ENCODE measurements at regions of chr4 and their contacts with region 1.

Region 1: GRCh38 chr4:169010125-169011023 is at the start of gene CBR4:
- DNase-seq: peak; percentile 99
- ATAC-seq: peak; percentile 96
- H3K4me3 ChIP-seq: peak within 1 kb of the TSS; percentile 94 to 100 (median 99)
- H3K4me3 Mint-ChIP-seq: peak within 1 kb of the TSS; percentile 91
- H3K27ac ChIP-seq: peak within 1 kb of the TSS; percentile 89 to 92
- H3K27ac Mint-ChIP-seq: peak within 1 kb of the TSS; percentile 99
- H3K4me1 ChIP-seq: peaks cover 16 to 18% of the 10 kb centered on the region in 2 donors
- H3K4me1 Mint-ChIP-seq: peaks cover 26% of the 10 kb centered on the region
- H3K27me3 ChIP-seq: no peaks in the 10 kb centered on the region
- H3K27me3 Mint-ChIP-seq: peaks cover 4% of the 10 kb centered on the region
- CTCF ChIP-seq: peak; percentile 41
- total RNA-seq, gene CBR4: 32.1 and 39.0 TPM in 2 replicates

Region 2: GRCh38 chr4:168480931-168481611 is 529.3 kb before region 1 on chr4:
- CTCF ChIA-PET with region 1: no interaction called
- POLR2A ChIA-PET with region 1: no interaction called
- intact Hi-C with region 1: loop called (anchors 2 kb)
- DNase-seq: peak; percentile 78
- ATAC-seq: peak; percentile 43
- H3K4me3 ChIP-seq: peak overlapping the region; percentile 86 to 97 (median 91)
- H3K4me3 Mint-ChIP-seq: peak overlapping the region; percentile 98
- H3K27ac ChIP-seq: peak overlapping the region; percentile 88 to 92
- H3K27ac Mint-ChIP-seq: peak overlapping the region; percentile 98
- H3K4me1 ChIP-seq: peaks cover 12% of the 10 kb centered on the region in 2 donors
- H3K4me1 Mint-ChIP-seq: peaks cover 44% of the 10 kb centered on the region
- H3K27me3 ChIP-seq: no peaks in the 10 kb centered on the region
- H3K27me3 Mint-ChIP-seq: peaks cover 5% of the 10 kb centered on the region
- CTCF ChIP-seq: no peak

Region 3: DNA sequence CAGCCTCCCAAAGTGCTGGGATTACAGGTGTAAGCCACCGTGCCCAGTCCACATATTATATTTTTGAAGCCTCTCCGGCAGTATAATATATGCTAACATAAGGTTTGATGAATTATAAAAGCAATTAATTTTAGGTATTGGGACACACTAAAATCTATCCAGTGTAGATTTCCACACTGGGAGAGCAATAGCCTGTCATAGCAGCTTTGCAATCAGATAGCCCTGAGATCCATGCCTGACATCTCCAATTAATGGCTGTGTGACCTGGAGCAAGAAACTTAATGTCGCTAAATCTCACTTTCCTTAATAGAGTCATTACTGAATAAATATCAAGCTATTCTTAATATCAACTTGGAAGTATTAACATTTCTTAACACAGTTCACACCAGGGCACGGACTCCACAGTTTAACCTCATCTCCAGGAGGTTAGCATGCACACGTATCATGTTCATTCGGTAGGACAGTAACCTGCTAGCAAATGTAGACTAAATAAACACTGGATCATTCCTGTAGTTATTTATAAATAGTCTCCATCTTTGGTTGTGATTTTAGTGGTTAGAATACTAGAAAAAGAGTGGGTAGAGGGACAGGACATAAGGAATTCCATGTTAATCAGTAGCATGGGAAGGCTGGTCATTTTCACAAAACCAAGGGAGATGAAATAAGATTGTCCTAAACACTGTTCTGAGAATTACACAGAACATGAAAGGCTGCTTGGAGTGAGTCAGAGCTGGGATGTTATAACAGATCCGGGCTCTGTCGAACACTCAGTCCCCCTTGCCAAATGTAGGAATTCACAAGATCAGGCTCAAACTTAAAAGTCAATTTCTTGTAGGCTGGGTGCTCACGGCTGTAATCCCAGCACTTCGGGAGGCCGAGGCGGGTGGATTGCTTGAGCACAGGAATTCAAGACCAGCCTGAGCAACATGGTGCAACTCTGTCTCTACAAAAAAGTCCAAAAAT is 258.8 kb before region 1 on chr4:
- CTCF ChIA-PET with region 1: no interaction called
- POLR2A ChIA-PET with region 1: no interaction called
- intact Hi-C with region 1: no loop called
- DNase-seq: no peak
- ATAC-seq: no peak
- H3K4me3 ChIP-seq: no peak overlapping the region
- H3K4me3 Mint-ChIP-seq: no peak overlapping the region
- H3K27ac ChIP-seq: no peak overlapping the region
- H3K27ac Mint-ChIP-seq: no peak overlapping the region
- H3K4me1 ChIP-seq: no peaks in the 10 kb centered on the region
- H3K4me1 Mint-ChIP-seq: no peaks in the 10 kb centered on the region
- H3K27me3 ChIP-seq: no peaks in the 10 kb centered on the region
- H3K27me3 Mint-ChIP-seq: peaks cover 2% of the 10 kb centered on the region
- CTCF ChIP-seq: no peak

Region 4: DNA sequence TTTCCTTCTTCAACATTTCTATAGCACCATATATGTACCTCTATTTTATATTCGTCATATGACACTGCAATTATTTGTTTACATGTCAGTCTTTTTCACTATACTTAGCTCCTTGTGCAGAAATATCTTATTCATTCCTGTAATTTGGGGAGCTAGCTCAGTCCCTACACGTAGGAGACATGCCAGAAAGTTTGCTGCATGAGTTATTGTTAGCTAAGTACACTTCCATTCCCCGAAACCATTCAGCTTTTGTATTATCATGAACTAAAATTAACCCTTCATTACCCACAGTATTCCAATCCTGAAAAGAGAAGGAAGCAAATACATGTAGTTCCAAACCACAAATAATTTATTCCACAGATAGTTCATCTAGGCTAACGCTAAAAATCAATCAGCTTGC is 10.6 kb before region 1 on chr4:
- CTCF ChIA-PET with region 1: interaction called, 15 read pairs
- POLR2A ChIA-PET with region 1: interaction called, 3 read pairs
- intact Hi-C with region 1: no loop called
- DNase-seq: no peak
- ATAC-seq: no peak
- H3K4me3 ChIP-seq: no peak overlapping the region
- H3K4me3 Mint-ChIP-seq: no peak overlapping the region
- H3K27ac ChIP-seq: no peak overlapping the region
- H3K27ac Mint-ChIP-seq: no peak overlapping the region
- H3K4me1 ChIP-seq: no peaks in the 10 kb centered on the region
- H3K4me1 Mint-ChIP-seq: peaks cover 4% of the 10 kb centered on the region
- H3K27me3 ChIP-seq: no peaks in the 10 kb centered on the region
- H3K27me3 Mint-ChIP-seq: no peaks in the 10 kb centered on the region
- CTCF ChIP-seq: no peak

Region 5: DNA sequence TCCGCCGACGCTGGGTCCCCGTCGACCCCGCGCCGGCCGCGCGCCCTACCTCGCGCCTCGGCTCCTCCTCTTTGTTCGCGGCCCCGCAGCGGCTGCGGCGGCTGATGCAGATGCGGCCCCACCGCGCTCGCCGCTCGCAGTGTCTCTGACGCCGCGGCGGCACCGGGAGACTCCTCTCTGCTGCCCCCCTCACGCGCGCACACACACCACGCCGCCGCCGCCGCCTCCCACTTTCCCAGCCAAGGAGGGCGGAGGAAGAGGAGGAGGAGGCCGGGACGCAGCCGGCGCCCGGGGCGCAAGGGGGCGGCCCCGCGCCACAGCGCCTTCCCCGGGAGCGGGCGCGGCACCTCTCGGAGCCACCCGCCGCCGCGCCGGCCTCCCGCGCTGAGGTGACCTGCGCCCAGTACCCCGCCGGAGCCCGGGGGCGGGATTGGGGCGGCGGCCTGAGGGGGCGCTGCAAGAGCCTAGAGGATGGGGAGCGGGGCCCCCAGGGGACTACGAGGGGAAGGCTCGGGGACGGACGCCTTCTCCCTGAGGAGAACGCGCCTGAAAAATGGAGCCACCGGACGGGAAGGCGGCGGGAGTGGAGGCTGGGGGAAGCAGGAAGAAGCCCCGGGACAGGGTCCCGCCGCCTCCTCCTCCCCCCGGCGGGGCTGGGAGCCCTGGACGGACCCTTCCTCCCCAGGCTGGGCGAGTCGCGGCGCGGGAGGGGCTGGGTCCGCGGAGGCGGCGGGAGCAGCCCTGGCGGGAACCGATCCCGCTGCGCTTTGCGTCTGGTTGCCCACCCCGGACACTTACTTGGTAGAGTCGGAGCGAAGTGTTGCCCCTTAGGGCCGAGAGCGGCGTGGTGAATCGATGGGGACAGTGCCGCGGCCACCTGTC is 260.7 kb after region 1 on chr4 and contains the start of gene SH3RF1:
- CTCF ChIA-PET with region 1: no interaction called
- POLR2A ChIA-PET with region 1: interaction called, 5 read pairs
- intact Hi-C with region 1: loop called (anchors 2 kb)
- DNase-seq: peak; percentile 74
- ATAC-seq: peak; percentile 61
- H3K4me3 ChIP-seq: peak within 1 kb of the TSS; percentile 65 to 90 (median 77)
- H3K4me3 Mint-ChIP-seq: peak within 1 kb of the TSS; percentile 94
- H3K27ac ChIP-seq: peak within 1 kb of the TSS in 1 of 2 donors; percentile 16
- H3K27ac Mint-ChIP-seq: peak within 1 kb of the TSS; percentile 81
- H3K4me1 ChIP-seq: peaks cover 23 to 27% of the 10 kb centered on the region in 2 donors
- H3K4me1 Mint-ChIP-seq: peaks cover 28% of the 10 kb centered on the region
- H3K27me3 ChIP-seq: peaks cover 0 to 7% (median 0%) of the 10 kb centered on the region in 4 experiments
- H3K27me3 Mint-ChIP-seq: no peaks in the 10 kb centered on the region
- CTCF ChIP-seq: peak; percentile 37
- total RNA-seq, gene SH3RF1: 5.4 and 6.5 TPM in 2 replicates

Region 6: GRCh38 chr4:169566021-169566818 is 555.8 kb after region 1 on chr4:
- CTCF ChIA-PET with region 1: interaction called, 3 read pairs
- POLR2A ChIA-PET with region 1: no interaction called
- intact Hi-C with region 1: loop called (anchors 5 kb)
- DNase-seq: peak; percentile 64
- ATAC-seq: peak; percentile 41
- H3K4me3 ChIP-seq: no peak overlapping the region
- H3K4me3 Mint-ChIP-seq: no peak overlapping the region
- H3K27ac ChIP-seq: no peak overlapping the region
- H3K27ac Mint-ChIP-seq: no peak overlapping the region
- H3K4me1 ChIP-seq: no peaks in the 10 kb centered on the region
- H3K4me1 Mint-ChIP-seq: peaks cover 4% of the 10 kb centered on the region
- H3K27me3 ChIP-seq: no peaks in the 10 kb centered on the region
- H3K27me3 Mint-ChIP-seq: no peaks in the 10 kb centered on the region
- CTCF ChIP-seq: peak; percentile 84

Region 7: GRCh38 chr4:169619959-169620879 is 609.8 kb after region 1 on chr4 and contains the start of gene CLCN3:
- CTCF ChIA-PET with region 1: interaction called, 3 read pairs
- POLR2A ChIA-PET with region 1: no interaction called
- intact Hi-C with region 1: loop called (anchors 1 kb)
- DNase-seq: peak; percentile 99
- ATAC-seq: peak; percentile 93
- H3K4me3 ChIP-seq: peak within 1 kb of the TSS; percentile 61 to 100 (median 95)
- H3K4me3 Mint-ChIP-seq: peak within 1 kb of the TSS; percentile 96
- H3K27ac ChIP-seq: peak within 1 kb of the TSS; percentile 98
- H3K27ac Mint-ChIP-seq: peak within 1 kb of the TSS; percentile 100
- H3K4me1 ChIP-seq: peaks cover 18 to 23% of the 10 kb centered on the region in 2 donors
- H3K4me1 Mint-ChIP-seq: peaks cover 39% of the 10 kb centered on the region
- H3K27me3 ChIP-seq: no peaks in the 10 kb centered on the region
- H3K27me3 Mint-ChIP-seq: no peaks in the 10 kb centered on the region
- CTCF ChIP-seq: no peak
- total RNA-seq, gene CLCN3: 32.7 and 34.9 TPM in 2 replicates

Region 8: DNA sequence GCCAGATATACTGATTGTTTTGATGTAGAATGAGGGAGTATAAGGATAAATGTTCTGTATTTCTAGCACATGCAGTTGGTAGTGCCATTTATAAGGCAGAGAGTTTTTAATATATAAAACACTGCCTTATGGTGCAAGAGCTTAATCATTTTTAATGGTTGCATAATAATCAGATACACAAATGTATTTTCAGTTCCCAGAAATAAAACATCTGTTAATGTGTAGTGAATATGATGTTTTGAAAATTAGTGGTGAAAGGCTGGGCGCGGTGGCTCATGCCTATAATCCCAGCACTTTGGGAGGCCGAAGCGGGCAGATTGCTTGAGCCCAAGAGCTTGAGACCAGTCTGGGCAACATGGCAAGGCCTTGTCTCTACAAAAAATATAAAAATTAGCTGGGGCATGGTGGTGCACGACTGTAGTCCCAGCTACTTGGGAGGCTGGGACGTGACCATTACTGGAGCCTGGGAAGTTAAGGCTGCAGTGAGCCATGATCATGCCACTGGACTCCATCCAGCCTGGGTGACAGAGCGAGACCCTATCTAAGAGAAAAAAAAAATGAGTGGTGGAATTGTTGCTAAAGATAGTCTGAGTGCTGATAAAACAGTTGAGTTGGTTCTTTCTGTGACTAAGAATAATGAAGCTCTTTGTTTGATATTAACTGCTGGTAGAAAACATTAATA is 639.3 kb after region 1 on chr4:
- CTCF ChIA-PET with region 1: no interaction called
- POLR2A ChIA-PET with region 1: no interaction called
- intact Hi-C with region 1: no loop called
- DNase-seq: no peak
- ATAC-seq: no peak
- H3K4me3 ChIP-seq: no peak overlapping the region
- H3K4me3 Mint-ChIP-seq: no peak overlapping the region
- H3K27ac ChIP-seq: no peak overlapping the region
- H3K27ac Mint-ChIP-seq: peak overlapping the region; percentile 20
- H3K4me1 ChIP-seq: no peaks in the 10 kb centered on the region
- H3K4me1 Mint-ChIP-seq: peaks cover 4% of the 10 kb centered on the region
- H3K27me3 ChIP-seq: no peaks in the 10 kb centered on the region
- H3K27me3 Mint-ChIP-seq: no peaks in the 10 kb centered on the region
- CTCF ChIP-seq: no peak

Measured in B cell (primary cell).